HCT116 (cell line): ENCODE measurements at regions of chr3 and their contacts with region 1.

Region 1: DNA sequence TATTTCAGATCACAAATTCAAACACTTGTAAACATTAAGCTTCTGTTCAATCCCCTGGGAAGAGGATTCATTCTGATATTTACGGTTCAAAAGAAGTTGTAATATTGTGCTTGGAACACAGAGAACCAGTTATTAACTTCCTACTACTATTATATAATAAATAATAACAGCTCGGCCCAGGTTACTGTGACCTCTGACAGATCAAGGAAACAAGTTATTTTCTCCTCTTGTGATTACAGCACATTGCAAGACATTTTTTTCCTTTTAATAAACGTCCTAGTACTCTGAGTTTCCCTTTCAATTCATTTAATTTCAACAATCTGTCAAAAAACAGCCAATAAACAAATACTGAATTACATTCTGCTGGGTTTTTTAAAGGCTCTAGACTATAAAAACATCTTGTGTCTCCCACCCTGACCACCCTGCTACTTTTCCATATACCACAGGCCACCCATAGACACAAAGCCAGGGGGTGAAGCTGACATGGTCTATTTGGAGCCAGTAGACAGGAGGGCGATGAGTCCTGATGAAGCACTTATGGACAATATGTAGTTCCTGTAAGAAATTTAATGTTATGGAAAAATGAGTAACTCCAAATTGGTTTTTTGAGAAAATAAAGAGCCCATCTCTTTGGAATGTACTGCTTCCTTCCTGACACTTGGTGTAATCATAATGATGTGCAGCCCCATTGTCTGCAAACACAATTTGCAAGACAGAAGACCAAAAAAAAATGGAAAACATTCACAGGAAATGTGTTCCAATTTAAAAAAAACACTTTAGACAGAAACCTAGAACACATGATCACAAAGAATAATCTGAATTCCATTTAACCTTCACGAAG is 12.0 kb downstream of the SSR3 start:
- DNase-seq: no peak
- ATAC-seq: no peak
- H3K4me3 ChIP-seq: no peak overlapping the region
- H3K27ac ChIP-seq: no peak overlapping the region
- H3K4me1 ChIP-seq: no peaks in the 10 kb centered on the region
- H3K27me3 ChIP-seq: no peaks in the 10 kb centered on the region
- CTCF ChIP-seq: no peak
- POLR2A ChIP-seq: no peak
- RAD21 ChIP-seq: no peak

Region 2: GRCh38 chr3:156460206-156460611 is 82.7 kb before region 1 on chr3:
- CTCF ChIA-PET with region 1: no interaction called
- POLR2A ChIA-PET with region 1: no interaction called
- RAD21 ChIA-PET with region 1: no interaction called
- intact Hi-C with region 1: no loop called
- DNase-seq: no peak
- ATAC-seq: no peak
- H3K4me3 ChIP-seq: no peak overlapping the region
- H3K27ac ChIP-seq: no peak overlapping the region
- H3K4me1 ChIP-seq: peaks cover 0 to 9% of the 10 kb centered on the region in 2 experiments; a peak in 2 of 4 replicates
- H3K27me3 ChIP-seq: no peaks in the 10 kb centered on the region
- CTCF ChIP-seq: no peak
- POLR2A ChIP-seq: no peak
- RAD21 ChIP-seq: no peak

Region 3: GRCh38 chr3:157136647-157137387 is 593.9 kb after region 1 on chr3:
- CTCF ChIA-PET with region 1: interaction called, 4 read pairs
- POLR2A ChIA-PET with region 1: no interaction called
- RAD21 ChIA-PET with region 1: no interaction called
- intact Hi-C with region 1: loop called (anchors 5 kb)
- DNase-seq: no peak
- ATAC-seq: peak; percentile 42
- H3K4me3 ChIP-seq: no peak overlapping the region
- H3K27ac ChIP-seq: no peak overlapping the region
- H3K4me1 ChIP-seq: peaks cover 3 to 43% of the 10 kb centered on the region in 2 experiments
- H3K27me3 ChIP-seq: no peaks in the 10 kb centered on the region
- CTCF ChIP-seq: no peak
- POLR2A ChIP-seq: no peak
- RAD21 ChIP-seq: no peak